GM10248 (cell line): ENCODE measurements at regions of chr3 and their contacts with region 1.

Region 1: GRCh38 chr3:122258757-122259371 is 66.2 kb upstream of the CSTA start:
- DNase-seq: peak; percentile 76
- CTCF ChIP-seq: peak; percentile 74

Region 2: DNA sequence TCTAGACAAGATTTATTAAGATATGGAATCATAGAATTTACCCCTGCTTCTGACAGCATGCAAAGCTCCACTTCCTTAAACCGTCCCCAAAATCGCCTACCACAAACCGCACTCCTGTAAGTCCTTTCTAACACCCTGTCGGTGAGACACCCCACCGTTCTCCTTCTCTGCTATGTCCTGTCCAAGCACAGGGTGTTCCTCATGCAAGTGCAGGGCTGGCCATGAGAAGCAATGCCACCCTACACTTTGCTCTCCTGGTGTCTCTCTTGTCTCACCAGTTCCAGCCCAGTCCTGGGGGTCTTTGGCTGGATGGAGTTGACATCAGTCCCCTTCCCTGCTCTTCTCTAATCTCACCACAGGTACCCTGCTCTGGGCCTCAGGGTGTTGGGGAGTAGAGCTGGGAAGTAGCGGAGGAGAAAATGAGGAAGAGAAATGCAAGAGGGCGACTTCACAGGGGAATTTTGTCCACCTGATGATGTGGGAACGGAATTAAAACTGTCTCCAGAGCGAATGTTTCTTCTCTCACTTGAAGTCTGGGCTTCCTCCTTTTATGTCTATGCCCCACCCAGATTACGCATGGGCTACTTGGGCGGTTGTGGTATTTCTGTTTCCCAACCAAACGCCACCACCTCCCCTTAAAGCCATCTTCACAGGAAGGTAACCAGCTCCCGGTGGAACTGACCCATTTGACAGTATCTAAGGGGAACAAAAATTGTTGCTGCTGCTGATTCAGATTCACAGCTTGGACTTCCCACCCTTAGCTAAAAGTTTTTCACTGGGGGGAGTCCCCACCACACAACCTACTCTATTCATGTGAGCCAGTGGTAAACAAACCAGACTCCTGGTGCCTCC is 25.5 kb before region 1 on chr3:
- CTCF ChIA-PET with region 1: interaction called, 13 read pairs
- POLR2A ChIA-PET with region 1: interaction called, 3 read pairs
- DNase-seq: peak; percentile 46
- CTCF ChIP-seq: no peak

Region 3: DNA sequence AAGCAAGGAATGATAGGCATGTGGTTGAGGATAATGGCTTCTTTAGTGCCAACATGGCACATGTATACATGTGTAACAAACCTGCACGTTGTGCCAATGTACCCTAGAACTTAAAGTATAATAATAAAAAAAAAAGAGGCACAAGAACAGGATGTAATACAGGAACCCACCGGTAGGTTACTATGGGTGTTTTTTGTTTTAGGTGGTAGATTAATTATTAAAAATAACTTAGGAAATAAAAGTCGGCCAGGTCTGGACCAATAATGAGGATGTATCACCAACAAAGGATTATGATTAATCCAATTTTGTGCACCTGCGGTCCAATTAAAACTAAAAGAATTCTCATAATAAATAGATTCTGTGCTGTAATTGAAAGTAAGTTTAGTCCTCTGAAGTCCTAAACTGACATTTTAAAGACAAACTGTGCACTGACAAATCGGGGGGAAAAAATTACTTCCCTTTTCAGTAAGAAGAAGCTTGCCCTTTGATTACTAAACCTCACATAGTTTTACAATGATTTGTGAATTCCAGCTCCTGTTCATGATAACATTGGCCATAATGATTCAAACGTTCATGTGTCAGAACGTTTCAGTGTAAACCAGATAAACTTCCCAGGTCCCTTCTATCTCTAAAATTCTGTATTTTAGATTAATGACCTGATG is 13.2 kb before region 1 on chr3:
- CTCF ChIA-PET with region 1: interaction called, 10 read pairs
- POLR2A ChIA-PET with region 1: no interaction called
- DNase-seq: no peak
- CTCF ChIP-seq: peak; percentile 7

Region 4: GRCh38 chr3:122283796-122284445 is 25.1 kb after region 1 on chr3:
- CTCF ChIA-PET with region 1: interaction called, 12 read pairs
- POLR2A ChIA-PET with region 1: no interaction called
- DNase-seq: no peak
- CTCF ChIP-seq: no peak

Region 5: GRCh38 chr3:122377975-122378374 is 119.1 kb after region 1 on chr3:
- CTCF ChIA-PET with region 1: no interaction called
- POLR2A ChIA-PET with region 1: no interaction called
- DNase-seq: no peak
- CTCF ChIP-seq: no peak